Breast epithelium (tissue), 4 donors: ENCODE measurements at regions of chrX and their contacts with region 1.

Region 1: DNA sequence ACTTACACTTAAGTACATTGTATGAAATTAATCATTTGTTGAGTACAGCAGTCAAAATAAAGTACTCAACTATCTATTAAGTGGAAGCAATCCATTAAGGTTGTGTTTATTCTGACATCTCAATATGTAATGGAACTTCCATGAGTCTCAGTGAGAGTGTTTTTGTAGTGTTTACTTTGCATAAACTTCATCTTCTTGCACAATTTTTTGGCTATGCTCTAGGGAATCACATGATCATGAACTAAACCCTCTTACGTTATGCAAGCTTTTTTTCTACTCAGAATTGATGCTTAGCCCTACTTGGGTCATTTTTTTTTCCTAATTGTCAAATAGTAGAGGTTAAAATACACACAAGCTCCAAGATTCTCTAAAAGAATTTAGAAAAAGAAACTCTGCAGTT is 21.1 kb upstream of the PIGA start:
- DNase-seq: no peak
- H3K4me3 ChIP-seq: no peak overlapping the region
- H3K27ac ChIP-seq: peak overlapping the region in 1 of 2 donors; percentile 43
- H3K4me1 ChIP-seq: no peaks in the 10 kb centered on the region
- H3K27me3 ChIP-seq: peaks cover 0 to 8% of the 10 kb centered on the region in 2 donors
- CTCF ChIP-seq: no peak
- POLR2A ChIP-seq: no peak

Region 2: GRCh38 chrX:13428055-13428786 is 1928.2 kb before region 1 on chrX:
- intact Hi-C with region 1: loop called (anchors 10 kb)
- DNase-seq: no peak
- H3K4me3 ChIP-seq: no peak overlapping the region
- H3K27ac ChIP-seq: peak overlapping the region in 1 of 2 donors; percentile 38
- H3K4me1 ChIP-seq: no peaks in the 10 kb centered on the region
- H3K27me3 ChIP-seq: peaks cover 0 to 30% of the 10 kb centered on the region in 2 donors
- CTCF ChIP-seq: no peak
- POLR2A ChIP-seq: no peak

Region 3: GRCh38 chrX:14528629-14529289 is 827.7 kb before region 1 on chrX:
- intact Hi-C with region 1: loop called (anchors 5 kb)
- DNase-seq: peak in 1 of 2 donors; percentile 20
- H3K4me3 ChIP-seq: peak overlapping the region in 1 of 3 donors; percentile 36
- H3K27ac ChIP-seq: no peak overlapping the region
- H3K4me1 ChIP-seq: no peaks in the 10 kb centered on the region
- H3K27me3 ChIP-seq: peaks cover 0 to 25% of the 10 kb centered on the region in 2 donors
- CTCF ChIP-seq: peak in 2 of 3 donors; percentile 9 to 24
- POLR2A ChIP-seq: no peak